GM12878 (cell line): ENCODE measurements at regions of chr17 and their contacts with region 1.

Region 1: DNA sequence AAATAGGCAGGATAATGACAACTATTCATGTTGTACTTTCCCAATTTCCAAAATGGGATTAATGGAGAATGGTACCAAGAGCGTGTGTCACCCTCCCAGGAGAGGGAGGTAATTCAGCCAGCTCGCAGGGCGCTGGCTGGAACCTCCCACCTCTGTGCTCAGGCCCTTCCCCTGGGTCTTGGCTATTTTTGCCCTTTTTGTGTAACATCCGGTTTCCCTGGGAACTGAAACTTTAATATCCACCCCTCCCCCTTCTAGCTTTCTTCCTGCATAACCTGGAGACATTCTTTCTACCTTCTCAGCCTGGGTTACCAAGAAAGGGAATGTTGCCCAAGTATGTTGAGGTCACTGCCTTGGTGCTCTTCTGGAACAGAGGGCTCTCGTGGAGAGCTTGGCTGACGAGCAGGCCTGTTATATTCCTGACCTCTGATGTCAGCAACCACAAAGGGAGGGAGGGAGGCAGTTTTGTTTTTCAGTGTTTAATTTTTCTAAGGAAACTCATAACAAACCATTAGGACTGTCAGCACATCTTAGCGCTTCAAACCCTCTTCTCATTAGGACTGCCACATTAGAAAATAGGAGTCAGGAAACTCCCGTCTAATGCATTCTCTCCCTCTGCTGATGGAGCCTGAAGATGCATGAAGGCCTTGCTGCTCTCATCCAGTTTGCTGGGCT is 25.6 kb downstream of the ITGB3 start:
- DNase-seq: peak; percentile 92
- ATAC-seq: peak; percentile 91
- H3K4me3 ChIP-seq: peak overlapping the region; percentile 57
- H3K27ac ChIP-seq: peak overlapping the region; percentile 79
- H3K4me1 ChIP-seq: peaks cover 40% of the 10 kb centered on the region
- H3K27me3 ChIP-seq: no peaks in the 10 kb centered on the region
- CTCF ChIP-seq: no peak
- EP300 ChIP-seq: peak; percentile 19 to 70; a peak in 2 of 4 replicates
- POLR2A ChIP-seq: no peak
- RAD21 ChIP-seq: no peak; the same call in 1 of the 2 replicates

Region 2: GRCh38 chr17:47220531-47220999 is 58.6 kb before region 1 on chr17:
- CTCF ChIA-PET with region 1: no interaction called
- POLR2A ChIA-PET with region 1: no interaction called
- RAD21 ChIA-PET with region 1: no interaction called
- SMC1A ChIA-PET with region 1: no interaction called
- in situ Hi-C with region 1: no loop called
- intact Hi-C with region 1: no loop called
- DNase-seq: no peak
- ATAC-seq: no peak; the same call in 2 of the 3 replicates
- H3K4me3 ChIP-seq: no peak overlapping the region
- H3K27ac ChIP-seq: no peak overlapping the region
- H3K4me1 ChIP-seq: peaks cover 9% of the 10 kb centered on the region
- H3K27me3 ChIP-seq: no peaks in the 10 kb centered on the region
- CTCF ChIP-seq: no peak
- EP300 ChIP-seq: no peak
- POLR2A ChIP-seq: no peak
- RAD21 ChIP-seq: no peak

Region 3: DNA sequence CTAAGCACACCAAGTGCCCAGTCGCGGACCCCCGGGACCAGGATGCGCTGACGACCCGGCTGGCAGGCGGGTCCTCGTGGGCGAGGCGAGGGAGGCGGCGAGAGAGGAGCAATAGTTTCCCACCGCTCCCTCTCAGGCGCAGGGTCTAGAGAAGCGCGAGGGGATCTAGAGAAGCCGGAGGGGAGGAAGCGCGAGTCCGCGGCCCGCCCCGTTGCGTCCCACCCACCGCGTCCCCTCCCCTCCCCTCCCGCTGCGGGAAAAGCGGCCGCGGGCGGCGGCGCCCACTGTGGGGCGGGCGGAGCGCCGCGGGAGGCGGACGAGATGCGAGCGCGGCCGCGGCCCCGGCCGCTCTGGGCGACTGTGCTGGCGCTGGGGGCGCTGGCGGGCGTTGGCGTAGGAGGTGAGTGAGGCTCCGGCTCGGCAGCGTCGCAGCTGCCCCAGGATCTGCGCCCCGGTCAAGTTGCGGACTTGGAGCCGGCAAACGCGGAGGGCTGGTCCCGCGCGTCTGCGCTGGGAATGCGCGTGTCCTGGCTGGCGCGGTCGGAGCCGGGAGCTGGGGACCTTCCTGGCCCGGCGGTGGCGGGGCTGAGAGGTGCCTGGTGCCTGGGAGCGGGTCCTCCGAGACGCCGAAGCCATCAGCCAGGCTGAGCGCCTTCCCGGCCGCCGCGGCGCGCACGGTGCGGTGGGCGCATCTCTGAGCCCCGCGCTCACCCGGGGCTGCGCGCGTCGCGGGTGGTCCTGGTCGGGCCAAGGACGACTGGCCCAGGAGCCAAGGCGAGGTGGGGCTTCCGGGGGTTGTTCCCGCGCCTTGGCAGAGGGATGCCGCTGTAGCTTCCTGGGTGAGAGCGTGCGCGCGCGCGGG is 25.4 kb before region 1 on chr17 and contains the start of gene ITGB3:
- CTCF ChIA-PET with region 1: interaction called, 9 read pairs
- POLR2A ChIA-PET with region 1: interaction called, 42 read pairs
- RAD21 ChIA-PET with region 1: interaction called, 12 read pairs
- SMC1A ChIA-PET with region 1: interaction called, 81 read pairs
- in situ Hi-C with region 1: no loop called
- intact Hi-C with region 1: loop called (anchors 2 kb)
- DNase-seq: no peak
- ATAC-seq: peak; percentile 93
- H3K4me3 ChIP-seq: peak within 1 kb of the TSS; percentile 81
- H3K27ac ChIP-seq: no peak within 1 kb of the TSS
- H3K4me1 ChIP-seq: no peaks in the 10 kb centered on the region; the same call in 1 of the 2 replicates
- H3K27me3 ChIP-seq: no peaks in the 10 kb centered on the region
- CTCF ChIP-seq: peak; percentile 56 to 64 (median 56); a peak in 5 of 6 replicates
- EP300 ChIP-seq: no peak
- POLR2A ChIP-seq: peak; percentile 34; the same call in 1 of the 2 replicates
- RAD21 ChIP-seq: peak; percentile 50
- polyA plus RNA-seq, gene ITGB3: 0.69 to 1.4 TPM

Region 4: GRCh38 chr17:47265983-47266541 is 13.1 kb before region 1 on chr17:
- CTCF ChIA-PET with region 1: interaction called, 6 read pairs
- POLR2A ChIA-PET with region 1: interaction called, 7 read pairs
- RAD21 ChIA-PET with region 1: interaction called, 8 read pairs
- SMC1A ChIA-PET with region 1: interaction called, 16 read pairs
- in situ Hi-C with region 1: no loop called
- intact Hi-C with region 1: no loop called
- DNase-seq: no peak
- ATAC-seq: peak; percentile 42
- H3K4me3 ChIP-seq: no peak overlapping the region
- H3K27ac ChIP-seq: no peak overlapping the region
- H3K4me1 ChIP-seq: 0 out of 2 replicates have a peak, but pooled peaks cover 3% of the 10 kb centered on the region
- H3K27me3 ChIP-seq: no peaks in the 10 kb centered on the region
- CTCF ChIP-seq: no peak
- EP300 ChIP-seq: no peak
- POLR2A ChIP-seq: no peak
- RAD21 ChIP-seq: no peak

Region 5: GRCh38 chr17:47335101-47335936 is 56.1 kb after region 1 on chr17:
- CTCF ChIA-PET with region 1: no interaction called
- POLR2A ChIA-PET with region 1: no interaction called
- RAD21 ChIA-PET with region 1: no interaction called
- SMC1A ChIA-PET with region 1: no interaction called
- in situ Hi-C with region 1: no loop called
- intact Hi-C with region 1: no loop called
- DNase-seq: no peak
- ATAC-seq: no peak
- H3K4me3 ChIP-seq: no peak overlapping the region
- H3K27ac ChIP-seq: no peak overlapping the region
- H3K4me1 ChIP-seq: no peaks in the 10 kb centered on the region
- H3K27me3 ChIP-seq: no peaks in the 10 kb centered on the region
- CTCF ChIP-seq: no peak
- EP300 ChIP-seq: no peak
- POLR2A ChIP-seq: no peak
- RAD21 ChIP-seq: no peak

Region 6: GRCh38 chr17:47470836-47471235 is 191.6 kb after region 1 on chr17:
- CTCF ChIA-PET with region 1: no interaction called
- POLR2A ChIA-PET with region 1: no interaction called
- RAD21 ChIA-PET with region 1: no interaction called
- SMC1A ChIA-PET with region 1: no interaction called
- in situ Hi-C with region 1: no loop called
- intact Hi-C with region 1: no loop called
- DNase-seq: no peak
- ATAC-seq: no peak
- H3K4me3 ChIP-seq: no peak overlapping the region
- H3K27ac ChIP-seq: no peak overlapping the region
- H3K4me1 ChIP-seq: no peaks in the 10 kb centered on the region
- H3K27me3 ChIP-seq: no peaks in the 10 kb centered on the region
- CTCF ChIP-seq: no peak
- EP300 ChIP-seq: no peak
- POLR2A ChIP-seq: no peak
- RAD21 ChIP-seq: no peak